ENCODE measurements at regions of chr4 and their contacts with region 1.

Region 1: GRCh38 chr4:102299354-102300107 is 45.8 kb downstream of the SLC39A8 start:
- DNase-seq: peak; percentile 58 to 65
- H3K4me3 ChIP-seq: no peak overlapping the region
- H3K4me3 Mint-ChIP-seq: no peak overlapping the region
- H3K27ac Mint-ChIP-seq: no peak overlapping the region
- H3K4me1 ChIP-seq: peaks cover 8% of the 10 kb centered on the region; the same call in 1 of the 2 replicates
- H3K4me1 Mint-ChIP-seq: no peaks in the 10 kb centered on the region
- H3K27me3 ChIP-seq: no peaks in the 10 kb centered on the region
- H3K27me3 Mint-ChIP-seq: no peaks in the 10 kb centered on the region
- CTCF ChIP-seq: peak; percentile 70 to 81

Region 2: DNA sequence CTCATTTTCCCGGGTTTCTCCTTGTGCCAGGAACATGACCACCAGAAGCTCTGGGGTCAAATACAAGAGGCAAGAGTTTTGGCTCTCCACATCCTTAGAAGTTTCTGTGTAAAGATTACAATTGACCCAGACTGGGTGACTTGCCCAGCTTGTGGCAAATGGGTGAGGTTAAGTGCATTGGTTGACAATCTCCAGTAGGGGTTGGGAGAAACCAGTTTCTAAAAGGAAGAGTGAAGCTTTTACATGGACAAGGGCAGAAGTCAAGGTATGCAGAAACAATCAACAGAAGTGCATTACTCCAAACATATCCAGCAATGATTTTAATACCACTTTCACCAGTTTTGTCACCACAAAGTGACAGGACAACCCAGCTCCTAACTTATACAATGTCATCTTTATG is 44.1 kb before region 1 on chr4:
- CTCF ChIA-PET with region 1: no interaction called
- POLR2A ChIA-PET with region 1: no interaction called
- intact Hi-C with region 1: loop called (anchors 1 kb)
- DNase-seq: no peak
- H3K4me3 ChIP-seq: no peak overlapping the region
- H3K4me3 Mint-ChIP-seq: no peak overlapping the region
- H3K27ac Mint-ChIP-seq: no peak overlapping the region
- H3K4me1 ChIP-seq: peaks cover 7% of the 10 kb centered on the region; the same call in 1 of the 2 replicates
- H3K4me1 Mint-ChIP-seq: peaks cover 7% of the 10 kb centered on the region
- H3K27me3 ChIP-seq: no peaks in the 10 kb centered on the region
- H3K27me3 Mint-ChIP-seq: no peaks in the 10 kb centered on the region
- CTCF ChIP-seq: no peak

Region 3: DNA sequence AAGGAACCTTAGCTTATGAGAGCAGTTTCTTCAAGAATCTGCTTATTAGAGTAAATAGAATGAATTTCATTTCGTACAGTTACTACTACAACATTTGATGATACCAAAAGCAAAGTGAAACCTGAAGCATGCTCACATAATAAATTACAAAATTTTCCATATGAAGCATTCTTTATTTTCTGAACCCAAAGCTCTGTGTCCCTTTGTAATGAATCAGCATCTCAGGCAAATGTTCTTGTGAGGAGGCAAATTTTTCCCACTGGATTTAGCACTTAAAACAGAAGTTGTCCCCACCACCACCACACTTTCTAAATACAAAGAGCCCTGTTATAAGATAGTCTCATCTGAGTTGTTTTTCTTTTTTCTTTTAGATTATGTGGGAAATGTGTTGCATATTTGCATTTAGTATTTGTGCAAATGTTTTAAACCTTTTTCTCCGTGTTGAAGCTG is 131.0 kb after region 1 on chr4:
- CTCF ChIA-PET with region 1: no interaction called
- POLR2A ChIA-PET with region 1: no interaction called
- intact Hi-C with region 1: loop called (anchors 1 kb)
- DNase-seq: no peak
- H3K4me3 ChIP-seq: peak overlapping the region; percentile 41
- H3K4me3 Mint-ChIP-seq: peak overlapping the region; percentile 82
- H3K27ac Mint-ChIP-seq: peak overlapping the region; percentile 77
- H3K4me1 ChIP-seq: peaks cover 5% of the 10 kb centered on the region; the same call in 1 of the 2 replicates
- H3K4me1 Mint-ChIP-seq: peaks cover 10% of the 10 kb centered on the region
- H3K27me3 ChIP-seq: no peaks in the 10 kb centered on the region
- H3K27me3 Mint-ChIP-seq: no peaks in the 10 kb centered on the region
- CTCF ChIP-seq: no peak

Measured in Caco-2 (cell line).